ENCODE measurements at regions of chr3 and their contacts with region 1.

Region 1: GRCh38 chr3:42839616-42840015 is 30.4 kb downstream of the ACKR2 start:
- DNase-seq: no peak
- H3K4me3 ChIP-seq: no peak overlapping the region
- H3K27ac ChIP-seq: no peak overlapping the region
- H3K4me1 ChIP-seq: peaks cover 0 to 8% (median 4%) of the 10 kb centered on the region in 4 experiments; a peak in 6 of 7 replicates
- H3K27me3 ChIP-seq: no peaks in the 10 kb centered on the region
- CTCF ChIP-seq: peak in 2 of 3 experiments; percentile 71 to 96; a peak in 3 of 4 replicates
- EP300 ChIP-seq: no peak
- POLR2A ChIP-seq: no peak
- RAD21 ChIP-seq: peak; percentile 60 to 71

Region 2: DNA sequence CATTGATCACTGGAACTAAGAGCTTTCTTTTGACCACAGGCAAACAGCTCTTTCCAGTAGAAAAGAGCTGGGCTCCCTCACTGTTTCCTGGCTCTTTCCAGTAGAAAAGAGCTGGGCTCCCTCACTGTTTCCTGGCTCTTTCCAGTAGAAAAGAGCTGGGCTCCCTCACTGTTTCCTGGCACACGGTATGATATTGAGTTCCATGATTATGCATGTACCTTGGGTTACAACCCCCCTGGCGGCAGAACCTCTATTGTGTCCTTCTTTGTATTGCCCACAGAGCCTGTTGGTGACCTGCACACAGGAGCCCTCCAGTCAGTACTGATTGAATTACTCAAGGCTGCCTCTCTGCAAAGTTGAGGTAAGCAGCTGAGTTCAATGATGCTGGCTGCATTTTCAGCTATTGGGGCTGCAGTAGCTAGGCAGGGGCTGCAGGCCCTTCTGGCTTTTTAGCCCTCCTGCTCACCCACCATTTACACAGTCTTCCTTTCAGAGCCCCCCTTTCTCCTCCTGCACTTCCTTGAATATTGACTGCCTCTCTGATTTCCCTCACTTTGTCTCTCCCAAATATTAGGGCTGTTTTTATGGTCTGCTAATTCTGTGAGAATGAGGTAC is 20.2 kb before region 1 on chr3:
- CTCF ChIA-PET with region 1: interaction called, 11 read pairs
- POLR2A ChIA-PET with region 1: no interaction called
- DNase-seq: peak in 1 of 2 experiments; percentile 55
- H3K4me3 ChIP-seq: no peak overlapping the region
- H3K27ac ChIP-seq: no peak overlapping the region
- H3K4me1 ChIP-seq: peaks cover 0 to 4% (median 2%) of the 10 kb centered on the region in 4 experiments; a peak in 2 of 7 replicates
- H3K27me3 ChIP-seq: no peaks in the 10 kb centered on the region; a peak in 1 of 7 replicates
- CTCF ChIP-seq: peak in 2 of 3 experiments; percentile 18; a peak in 2 of 4 replicates
- EP300 ChIP-seq: no peak
- POLR2A ChIP-seq: no peak
- RAD21 ChIP-seq: 0 out of 4 replicates have a peak, but pooled peaks of 1 of the 2 experiments have one; percentile 3

Region 3: DNA sequence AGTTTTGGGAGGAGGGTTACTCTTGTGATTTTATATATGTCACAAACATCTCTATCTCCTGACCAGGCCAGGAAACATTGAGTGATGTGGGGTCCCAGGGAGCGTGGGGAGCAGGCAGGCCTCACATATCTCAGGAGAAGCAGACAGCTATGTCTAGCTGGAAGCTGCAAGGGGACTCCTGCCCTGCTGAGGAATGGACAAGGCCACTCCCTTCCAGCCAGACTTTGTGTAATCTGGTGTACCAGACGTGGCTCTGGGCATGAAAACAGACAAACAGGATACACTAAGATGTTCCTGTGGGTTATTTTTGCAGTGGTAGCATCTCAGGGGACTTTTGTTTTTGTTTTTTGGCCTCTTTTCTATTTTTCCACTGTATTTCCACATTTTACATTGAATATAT is 12.8 kb after region 1 on chr3:
- CTCF ChIA-PET with region 1: interaction called, 34 read pairs
- POLR2A ChIA-PET with region 1: interaction called, 4 read pairs
- DNase-seq: no peak
- H3K4me3 ChIP-seq: no peak overlapping the region
- H3K27ac ChIP-seq: no peak overlapping the region
- H3K4me1 ChIP-seq: peaks cover 0 to 5% (median 0%) of the 10 kb centered on the region in 4 experiments; a peak in 2 of 7 replicates
- H3K27me3 ChIP-seq: no peaks in the 10 kb centered on the region
- CTCF ChIP-seq: no peak
- EP300 ChIP-seq: no peak
- POLR2A ChIP-seq: no peak
- RAD21 ChIP-seq: no peak

Region 4: DNA sequence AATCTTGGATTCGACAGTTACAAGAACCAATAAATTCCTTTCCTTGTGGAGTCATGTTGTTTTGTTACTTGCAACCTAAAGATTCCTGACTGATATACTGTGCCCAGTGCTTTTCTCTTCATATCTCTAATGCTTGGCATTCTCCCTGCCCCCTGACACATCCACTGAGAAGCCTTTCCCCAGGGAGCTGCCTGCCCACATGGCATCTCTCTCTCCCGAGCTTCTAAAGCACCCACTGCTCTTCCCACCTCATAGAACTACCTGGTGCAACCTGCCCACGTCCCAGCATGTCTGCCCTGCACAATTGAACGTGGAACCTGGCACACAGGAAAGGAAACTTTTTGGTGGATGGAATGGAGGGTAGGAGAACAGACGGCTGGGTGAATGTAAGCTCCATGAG is 29.2 kb after region 1 on chr3:
- CTCF ChIA-PET with region 1: interaction called, 13 read pairs
- POLR2A ChIA-PET with region 1: no interaction called
- DNase-seq: no peak
- H3K4me3 ChIP-seq: no peak overlapping the region
- H3K27ac ChIP-seq: no peak overlapping the region
- H3K4me1 ChIP-seq: no peaks in the 10 kb centered on the region
- H3K27me3 ChIP-seq: peaks cover 0 to 2% (median 0%) of the 10 kb centered on the region in 4 experiments; a peak in 2 of 7 replicates
- CTCF ChIP-seq: no peak
- EP300 ChIP-seq: no peak
- POLR2A ChIP-seq: no peak
- RAD21 ChIP-seq: no peak

Region 5: DNA sequence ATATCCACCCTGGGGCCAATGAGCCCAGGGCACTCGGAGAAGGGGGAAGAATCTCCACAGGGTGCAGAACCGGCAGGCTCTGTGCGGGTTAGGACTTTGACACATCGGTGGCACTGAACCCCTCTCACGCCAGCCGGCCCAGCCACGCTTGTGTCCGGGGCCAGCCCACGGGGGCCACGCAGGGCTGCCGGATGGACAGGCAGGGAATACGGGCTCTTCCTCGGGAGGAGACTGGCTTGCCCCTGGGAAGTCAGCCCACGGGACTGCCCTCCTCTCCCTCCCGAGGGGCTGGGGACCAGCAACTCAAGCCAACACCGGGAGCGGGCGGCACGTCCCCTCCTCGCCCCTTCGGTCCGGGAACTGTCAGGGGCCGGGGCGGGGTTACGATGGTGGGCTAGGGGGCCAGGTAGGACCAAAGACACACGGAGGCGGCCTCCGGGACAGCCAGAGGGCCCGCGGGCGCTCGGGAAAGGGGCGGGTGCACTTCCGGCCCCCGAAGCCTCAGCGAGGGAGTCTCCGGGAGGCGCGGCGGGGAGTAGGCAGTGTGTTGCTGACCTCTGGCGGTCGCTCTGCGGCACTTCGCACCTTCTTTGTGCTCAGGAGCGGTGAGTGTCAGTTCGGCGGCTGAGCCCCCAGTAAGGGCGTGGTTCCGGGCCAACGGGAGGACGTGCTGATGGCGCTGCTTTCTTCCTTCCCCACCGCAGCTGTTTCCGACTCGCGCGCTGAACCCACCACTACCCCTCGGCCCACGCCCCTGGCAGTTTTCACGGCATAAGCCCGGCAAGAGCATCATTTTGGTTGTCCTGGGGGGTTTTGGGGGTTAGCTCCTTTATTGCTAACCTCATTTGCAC is 41.2 kb after region 1 on chr3:
- CTCF ChIA-PET with region 1: interaction called, 18 read pairs
- POLR2A ChIA-PET with region 1: no interaction called
- DNase-seq: peak; percentile 74 to 86
- H3K4me3 ChIP-seq: peak overlapping the region; percentile 16 to 63 (median 44); a peak in 7 of 8 replicates
- H3K27ac ChIP-seq: no peak overlapping the region
- H3K4me1 ChIP-seq: peaks cover 3 to 12% (median 7%) of the 10 kb centered on the region in 4 experiments; a peak in 4 of 7 replicates
- H3K27me3 ChIP-seq: no peaks in the 10 kb centered on the region
- CTCF ChIP-seq: peak; percentile 86 to 91 (median 87)
- EP300 ChIP-seq: 0 out of 3 replicates have a peak, but pooled peaks of 1 of the 2 experiments have one; percentile 11
- POLR2A ChIP-seq: peak in 1 of 2 experiments; percentile 42; a peak in 1 of 3 replicates
- RAD21 ChIP-seq: peak; percentile 86 to 88

Measured in H1 (cell line).